MCF 10A (cell line): ENCODE measurements at regions of chr3 and their contacts with region 1.

Region 1: DNA sequence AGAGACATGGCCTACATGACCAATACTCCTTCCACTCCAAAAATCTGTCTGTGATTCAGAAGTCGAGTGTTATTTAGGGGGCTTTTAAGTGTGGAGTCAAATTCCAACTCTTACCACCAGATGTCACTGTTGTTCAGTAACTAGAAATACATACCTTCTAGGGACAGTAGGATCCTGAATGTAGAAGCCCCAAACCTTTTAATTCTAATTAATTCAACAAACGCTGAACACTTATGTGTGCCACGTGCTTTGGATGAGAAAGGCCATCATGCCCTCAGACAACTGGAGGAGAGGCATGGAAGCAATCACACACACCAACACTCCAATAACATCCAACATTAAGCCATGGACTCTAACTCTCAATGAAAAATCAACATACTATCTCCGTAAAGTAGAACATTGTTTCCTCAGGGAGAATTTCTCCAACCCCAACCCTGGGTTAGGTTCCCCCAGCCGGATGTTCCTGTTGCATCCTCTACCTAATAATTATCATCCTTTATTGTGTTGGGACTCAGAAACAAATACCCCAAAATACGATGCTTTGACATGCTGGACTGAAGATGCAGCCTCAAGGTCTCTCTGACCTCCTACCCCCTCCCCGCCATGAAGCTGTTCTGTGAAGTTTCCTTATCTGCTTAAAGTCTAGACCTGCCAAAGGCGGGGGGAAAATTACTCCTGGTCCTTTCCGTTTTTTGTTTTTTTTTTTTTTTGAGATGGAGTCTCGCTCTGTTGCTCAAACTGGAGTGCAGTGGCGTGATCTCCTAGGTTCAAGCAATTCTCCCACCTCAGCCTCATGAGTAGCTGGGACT is 8.0 kb upstream of the CCDC13 start:
- DNase-seq: peak; percentile 72
- H3K4me3 Mint-ChIP-seq: no peak overlapping the region
- H3K27ac Mint-ChIP-seq: peak overlapping the region; percentile 97
- H3K4me1 Mint-ChIP-seq: peaks cover 42% of the 10 kb centered on the region
- H3K27me3 Mint-ChIP-seq: no peaks in the 10 kb centered on the region
- CTCF ChIP-seq: peak; percentile 72

Region 2: DNA sequence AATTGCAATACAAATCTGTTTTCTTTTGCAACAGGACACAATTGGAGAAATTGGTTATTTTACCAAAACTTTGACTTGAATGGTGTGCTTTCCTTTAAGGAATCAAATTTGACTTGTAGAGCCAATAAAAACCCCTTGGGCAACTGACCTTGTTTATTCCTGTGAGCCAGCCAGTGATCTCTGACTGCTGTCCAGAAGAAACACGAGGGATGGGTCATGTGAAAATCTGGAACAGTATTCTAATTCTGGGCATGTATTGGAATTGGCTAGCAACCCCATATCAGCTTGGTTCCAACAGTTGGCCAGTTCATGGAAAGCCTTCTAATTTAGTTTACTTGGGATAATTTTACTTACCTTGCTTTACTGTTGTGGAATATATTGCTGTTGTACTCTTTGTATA is 59.4 kb before region 1 on chr3:
- CTCF ChIA-PET with region 1: no interaction called
- POLR2A ChIA-PET with region 1: no interaction called
- intact Hi-C with region 1: no loop called
- DNase-seq: no peak
- H3K4me3 Mint-ChIP-seq: no peak overlapping the region
- H3K27ac Mint-ChIP-seq: no peak overlapping the region
- H3K4me1 Mint-ChIP-seq: peaks cover 5% of the 10 kb centered on the region
- H3K27me3 Mint-ChIP-seq: peaks cover 9% of the 10 kb centered on the region
- CTCF ChIP-seq: no peak

Region 3: GRCh38 chr3:42763021-42763420 is 18.1 kb before region 1 on chr3:
- CTCF ChIA-PET with region 1: interaction called, 11 read pairs
- POLR2A ChIA-PET with region 1: interaction called, 8 read pairs
- intact Hi-C with region 1: no loop called
- DNase-seq: no peak
- H3K4me3 Mint-ChIP-seq: no peak overlapping the region
- H3K27ac Mint-ChIP-seq: no peak overlapping the region
- H3K4me1 Mint-ChIP-seq: peaks cover 13% of the 10 kb centered on the region
- H3K27me3 Mint-ChIP-seq: no peaks in the 10 kb centered on the region
- CTCF ChIP-seq: no peak

Region 4: GRCh38 chr3:42804106-42804830 is 23.2 kb after region 1 on chr3 and contains the start of gene HIGD1A:
- CTCF ChIA-PET with region 1: interaction called, 5 read pairs
- POLR2A ChIA-PET with region 1: interaction called, 51 read pairs
- intact Hi-C with region 1: no loop called
- DNase-seq: peak; percentile 97
- H3K4me3 Mint-ChIP-seq: peak within 1 kb of the TSS; percentile 92
- H3K27ac Mint-ChIP-seq: peak within 1 kb of the TSS; percentile 90
- H3K4me1 Mint-ChIP-seq: peaks cover 22% of the 10 kb centered on the region
- H3K27me3 Mint-ChIP-seq: no peaks in the 10 kb centered on the region
- CTCF ChIP-seq: no peak
- total RNA-seq, gene HIGD1A: 140 and 161 TPM in 2 replicates

Region 5: DNA sequence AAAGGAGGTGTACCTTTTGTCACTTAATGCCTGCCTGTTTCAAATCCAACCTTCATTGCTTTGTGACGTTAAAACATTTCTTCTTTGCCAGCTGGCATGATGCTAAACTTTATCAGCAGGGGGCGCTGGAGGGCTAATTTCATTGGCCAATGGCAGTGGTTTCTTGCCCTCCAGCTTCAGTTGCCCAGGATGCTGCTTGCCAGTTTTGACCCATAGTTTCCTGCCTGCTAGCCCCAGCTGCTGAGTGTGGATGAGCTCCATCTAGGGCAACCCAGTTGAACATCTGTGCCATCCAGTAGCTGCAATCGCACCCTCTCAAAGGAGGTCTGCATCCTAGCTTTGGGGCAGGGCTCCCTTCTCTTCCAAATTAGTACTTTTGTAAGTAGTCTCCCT is 50.2 kb after region 1 on chr3:
- CTCF ChIA-PET with region 1: interaction called, 20 read pairs
- POLR2A ChIA-PET with region 1: interaction called, 14 read pairs
- intact Hi-C with region 1: loop called (anchors 2 kb)
- DNase-seq: peak; percentile 78
- H3K4me3 Mint-ChIP-seq: no peak overlapping the region
- H3K27ac Mint-ChIP-seq: no peak overlapping the region
- H3K4me1 Mint-ChIP-seq: peaks cover 40% of the 10 kb centered on the region
- H3K27me3 Mint-ChIP-seq: no peaks in the 10 kb centered on the region
- CTCF ChIP-seq: peak; percentile 67

Region 6: DNA sequence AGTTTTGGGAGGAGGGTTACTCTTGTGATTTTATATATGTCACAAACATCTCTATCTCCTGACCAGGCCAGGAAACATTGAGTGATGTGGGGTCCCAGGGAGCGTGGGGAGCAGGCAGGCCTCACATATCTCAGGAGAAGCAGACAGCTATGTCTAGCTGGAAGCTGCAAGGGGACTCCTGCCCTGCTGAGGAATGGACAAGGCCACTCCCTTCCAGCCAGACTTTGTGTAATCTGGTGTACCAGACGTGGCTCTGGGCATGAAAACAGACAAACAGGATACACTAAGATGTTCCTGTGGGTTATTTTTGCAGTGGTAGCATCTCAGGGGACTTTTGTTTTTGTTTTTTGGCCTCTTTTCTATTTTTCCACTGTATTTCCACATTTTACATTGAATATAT is 71.3 kb after region 1 on chr3:
- CTCF ChIA-PET with region 1: interaction called, 10 read pairs
- POLR2A ChIA-PET with region 1: no interaction called
- intact Hi-C with region 1: no loop called
- DNase-seq: no peak
- H3K4me3 Mint-ChIP-seq: no peak overlapping the region
- H3K27ac Mint-ChIP-seq: peak overlapping the region; percentile 82
- H3K4me1 Mint-ChIP-seq: peaks cover 18% of the 10 kb centered on the region
- H3K27me3 Mint-ChIP-seq: no peaks in the 10 kb centered on the region
- CTCF ChIP-seq: no peak